SK-N-SH (cell line): ENCODE measurements at regions of chr15 and their contacts with region 1.

Region 1: DNA sequence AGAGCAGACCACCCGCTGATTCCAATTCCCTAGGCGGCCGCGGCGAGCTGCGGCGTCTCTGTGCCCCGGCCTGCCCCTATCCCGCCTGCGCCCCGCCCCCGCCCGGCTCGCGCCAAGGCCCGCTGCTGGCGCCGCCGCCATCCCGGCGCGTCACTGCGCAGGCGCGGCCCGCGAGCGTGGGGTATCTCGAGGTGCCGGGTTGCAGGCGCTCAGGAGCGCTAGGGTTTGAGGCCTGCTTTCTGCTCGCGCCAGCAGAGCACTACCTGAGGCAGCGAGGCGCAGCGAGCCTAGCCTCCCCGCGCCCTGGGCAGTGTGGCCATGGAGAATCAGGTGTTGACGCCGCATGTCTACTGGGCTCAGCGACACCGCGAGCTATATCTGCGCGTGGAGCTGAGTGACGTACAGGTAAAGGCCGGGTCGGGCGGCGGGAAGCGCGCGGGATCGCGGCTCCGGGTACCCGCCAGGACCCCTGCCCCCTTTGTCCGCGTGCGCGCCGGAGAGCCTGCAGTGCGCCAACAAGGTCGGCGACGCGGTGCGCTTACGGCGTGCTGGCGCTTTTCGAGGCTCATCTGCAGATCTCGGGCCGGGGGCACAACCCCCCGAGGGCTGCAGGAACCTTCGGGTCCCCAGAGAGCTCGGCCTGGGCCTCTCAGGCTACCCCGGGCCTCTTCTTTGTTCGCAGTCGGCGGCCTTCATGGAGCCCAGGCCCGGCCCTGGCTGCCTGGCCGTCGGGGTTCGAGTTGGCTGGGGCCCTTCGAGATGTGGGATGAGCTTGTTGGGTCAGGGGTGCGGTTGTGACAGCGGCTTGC is at the start of gene HACD3:
- DNase-seq: peak; percentile 99
- H3K4me3 ChIP-seq: peak within 1 kb of the TSS; percentile 77 to 82
- H3K27ac ChIP-seq: peak within 1 kb of the TSS; percentile 61 to 84
- H3K4me1 ChIP-seq: peaks cover 3 to 35% of the 10 kb centered on the region in 2 experiments; a peak in 2 of 4 replicates
- H3K27me3 ChIP-seq: no peaks in the 10 kb centered on the region
- CTCF ChIP-seq: no peak
- EP300 ChIP-seq: no peak
- RAD21 ChIP-seq: no peak
- polyA plus RNA-seq, gene HACD3: 45.7 and 58.6 TPM in 2 replicates

Region 2: GRCh38 chr15:65516997-65517865 is 13.3 kb before region 1 on chr15 and contains the start of gene DPP8:
- CTCF ChIA-PET with region 1: interaction called, 8 read pairs
- POLR2A ChIA-PET with region 1: interaction called, 15 read pairs
- DNase-seq: peak; percentile 93
- H3K4me3 ChIP-seq: peak within 1 kb of the TSS; percentile 96 to 99
- H3K27ac ChIP-seq: peak within 1 kb of the TSS; percentile 86 to 97
- H3K4me1 ChIP-seq: peaks cover 9 to 12% of the 10 kb centered on the region in 2 experiments; a peak in 3 of 4 replicates
- H3K27me3 ChIP-seq: no peaks in the 10 kb centered on the region
- CTCF ChIP-seq: peak; percentile 97
- EP300 ChIP-seq: no peak
- RAD21 ChIP-seq: peak; percentile 36
- polyA plus RNA-seq, gene DPP8: 13.9 and 14.1 TPM in 2 replicates